Aorta (tissue), 5 donors: ENCODE measurements at regions of chr11 and their contacts with region 1.

Region 1: DNA sequence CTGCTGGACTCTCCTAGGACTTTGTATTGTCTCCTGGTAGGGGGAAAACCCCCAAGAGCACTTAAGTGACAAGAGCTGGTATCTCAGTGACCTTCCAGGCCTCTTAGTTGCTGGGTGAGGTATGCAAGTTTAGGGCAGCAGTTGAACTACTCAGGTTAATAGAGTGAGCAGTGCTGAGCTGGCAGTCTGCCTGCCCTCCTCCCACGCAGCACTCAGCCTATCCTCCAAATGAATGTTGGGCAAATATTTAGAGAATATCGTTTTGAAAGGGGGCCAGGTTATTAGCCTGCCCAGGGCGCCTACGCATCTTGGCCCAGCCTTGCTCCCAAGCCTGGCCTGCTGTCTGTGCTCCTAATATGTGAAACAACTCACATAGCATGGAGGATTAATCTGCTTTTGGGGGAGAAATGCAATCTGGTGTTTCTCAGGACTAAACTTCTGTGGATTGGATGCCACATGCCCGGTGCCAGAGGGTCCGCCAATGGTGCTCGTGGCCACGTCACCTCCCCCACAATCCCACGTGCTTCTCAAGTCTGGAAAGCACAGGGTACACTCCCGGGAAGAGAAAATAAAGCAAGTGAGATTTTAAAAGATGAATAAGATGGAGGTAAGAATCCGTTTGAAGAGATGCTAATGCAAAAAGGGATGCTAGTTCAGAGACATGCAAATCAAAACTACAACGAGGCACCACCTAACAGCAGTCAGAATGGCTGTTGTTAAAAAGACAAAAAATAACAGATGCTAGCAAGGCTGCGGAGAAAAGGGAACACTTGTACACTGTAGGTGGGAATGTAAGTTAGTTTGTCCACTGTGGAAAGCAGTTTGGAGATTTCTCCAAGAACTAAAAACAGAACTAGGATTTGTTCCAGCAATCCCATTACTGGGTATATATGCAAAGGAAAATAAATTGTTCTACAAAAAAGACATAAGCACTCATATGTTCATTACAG is 67.7 kb downstream of the SPON1 start:
- DNase-seq: peak; percentile 84 to 93
- ATAC-seq: peak; percentile 82
- H3K4me3 ChIP-seq: no peak overlapping the region
- H3K27ac ChIP-seq: peak overlapping the region; percentile 39 to 77
- H3K4me1 ChIP-seq: peaks cover 0 to 10% of the 10 kb centered on the region in 2 donors
- H3K27me3 ChIP-seq: no peaks in the 10 kb centered on the region

Region 2: DNA sequence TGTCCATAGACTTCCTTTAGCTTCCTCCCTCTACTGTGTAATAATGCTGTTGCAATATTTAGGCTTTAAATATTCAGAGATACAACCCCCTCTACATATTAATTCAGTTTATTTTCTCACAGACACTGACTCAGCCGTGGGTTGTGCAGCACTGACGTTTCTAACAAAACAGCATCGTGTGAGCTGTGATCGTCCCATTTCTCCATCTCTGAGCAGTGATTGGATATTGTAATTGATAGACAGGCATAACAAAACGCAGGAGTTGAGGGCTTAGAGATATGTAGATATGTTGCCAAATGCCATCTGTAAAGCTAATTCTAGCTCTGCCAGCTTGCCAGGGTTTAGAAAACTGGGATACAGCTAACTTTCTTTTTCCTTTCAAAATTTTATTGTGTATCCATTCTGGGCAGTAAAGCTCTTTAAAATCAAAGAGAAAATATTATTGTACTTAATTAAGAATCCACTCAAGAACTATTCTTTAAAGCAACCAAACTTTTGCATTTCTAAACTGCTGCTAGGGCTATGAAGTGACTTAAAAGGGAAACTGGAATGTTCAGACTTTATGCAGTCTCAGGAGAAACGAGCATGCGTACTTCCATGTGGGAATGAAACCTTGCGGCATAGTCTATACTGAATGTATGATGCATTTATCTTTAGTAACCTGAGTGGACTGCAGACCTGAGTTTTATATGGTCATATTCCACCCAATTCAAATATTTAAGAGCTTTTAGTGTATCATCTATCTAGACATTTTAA is 590.0 kb before region 1 on chr11:
- intact Hi-C with region 1: loop called in 1 of 2 experiments (anchors 10 kb)
- DNase-seq: peak in 1 of 2 donors; percentile 44
- ATAC-seq: peak; percentile 85
- H3K4me3 ChIP-seq: peak overlapping the region; percentile 26 to 84
- H3K27ac ChIP-seq: peak overlapping the region in 1 of 2 donors; percentile 57
- H3K4me1 ChIP-seq: peaks cover 0 to 3% of the 10 kb centered on the region in 2 donors
- H3K27me3 ChIP-seq: no peaks in the 10 kb centered on the region

Region 3: DNA sequence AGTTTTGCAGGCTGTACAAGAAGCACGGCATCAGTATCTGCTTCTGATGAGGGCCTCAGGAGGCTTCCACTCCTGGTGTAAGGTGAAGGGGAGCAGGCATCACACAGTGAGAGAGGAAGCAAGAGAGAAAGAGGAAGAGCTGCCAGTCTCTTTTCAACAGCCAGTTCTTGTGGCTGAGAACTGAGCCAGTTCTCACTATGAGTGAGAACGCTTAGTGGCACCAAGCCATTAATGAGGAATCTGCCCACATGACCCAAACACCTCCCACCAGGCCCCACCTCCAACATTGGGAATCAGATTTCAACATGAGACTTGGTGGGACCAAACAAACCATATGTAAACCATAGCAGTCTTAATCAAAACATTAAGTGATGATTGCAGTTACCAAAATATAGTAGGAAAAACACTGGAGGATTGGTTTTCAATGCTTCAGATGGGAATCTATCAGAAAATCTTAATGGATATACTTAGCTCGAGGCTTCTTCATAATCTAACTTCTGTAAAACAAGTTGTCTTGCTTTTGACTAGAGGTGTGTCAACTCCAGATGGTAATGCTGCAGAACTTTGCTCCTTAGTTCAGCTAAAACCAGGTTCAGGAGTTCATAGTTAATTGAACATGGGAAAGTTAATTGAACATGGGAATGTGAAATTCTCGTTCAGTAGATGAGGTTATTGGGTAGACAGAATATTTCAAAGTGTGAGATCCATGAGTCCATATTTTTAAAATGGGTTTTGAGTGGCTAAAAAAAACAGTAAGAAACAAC is 349.6 kb before region 1 on chr11:
- intact Hi-C with region 1: no loop called
- DNase-seq: no peak
- ATAC-seq: no peak
- H3K4me3 ChIP-seq: no peak overlapping the region
- H3K27ac ChIP-seq: no peak overlapping the region
- H3K4me1 ChIP-seq: peaks cover 3 to 5% of the 10 kb centered on the region in 2 donors
- H3K27me3 ChIP-seq: no peaks in the 10 kb centered on the region

Region 4: GRCh38 chr11:14163576-14163975 is 133.3 kb after region 1 on chr11:
- intact Hi-C with region 1: no loop called
- DNase-seq: no peak
- ATAC-seq: no peak
- H3K4me3 ChIP-seq: no peak overlapping the region
- H3K27ac ChIP-seq: no peak overlapping the region
- H3K4me1 ChIP-seq: no peaks in the 10 kb centered on the region
- H3K27me3 ChIP-seq: no peaks in the 10 kb centered on the region